H1 (cell line): ENCODE measurements at regions of chr16 and their contacts with region 1.

Region 1: GRCh38 chr16:87447323-87447722 is 45.5 kb downstream of the ZCCHC14 start:
- DNase-seq: no peak
- H3K4me3 ChIP-seq: no peak overlapping the region
- H3K27ac ChIP-seq: no peak overlapping the region
- H3K4me1 ChIP-seq: no peaks in the 10 kb centered on the region
- H3K27me3 ChIP-seq: no peaks in the 10 kb centered on the region
- CTCF ChIP-seq: no peak
- EP300 ChIP-seq: no peak
- POLR2A ChIP-seq: no peak
- RAD21 ChIP-seq: no peak

Region 2: DNA sequence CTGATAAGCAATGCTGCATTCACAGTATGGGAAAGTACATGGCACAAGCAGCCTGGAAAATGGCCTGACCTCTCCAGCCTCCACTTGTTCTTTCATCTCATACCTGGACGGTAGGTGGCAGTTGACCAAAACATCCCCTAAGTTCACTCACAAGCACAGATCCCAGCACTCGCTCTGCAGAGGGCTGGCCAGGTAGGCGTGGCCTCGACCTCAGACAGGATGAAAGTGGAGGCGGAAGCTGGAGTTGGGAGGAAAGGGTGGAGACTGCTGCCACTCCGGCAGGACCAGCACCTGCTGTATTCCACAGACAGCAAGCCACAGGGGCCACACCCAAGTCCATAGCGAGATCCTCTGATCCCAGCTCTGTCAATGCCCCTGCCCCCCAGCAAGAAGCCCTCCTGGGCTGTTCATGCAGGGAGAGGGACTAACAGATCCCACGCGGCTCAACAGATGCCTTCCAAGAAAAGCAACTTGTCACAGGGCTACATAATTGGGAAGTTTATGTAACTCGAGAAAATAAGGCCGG is 14.2 kb after region 1 on chr16:
- CTCF ChIA-PET with region 1: interaction called, 20 read pairs
- POLR2A ChIA-PET with region 1: no interaction called
- DNase-seq: peak; percentile 87
- H3K4me3 ChIP-seq: peak overlapping the region in 2 of 4 experiments; percentile 24 to 26; a peak in 4 of 8 replicates
- H3K27ac ChIP-seq: no peak overlapping the region
- H3K4me1 ChIP-seq: peaks cover 2 to 4% (median 3%) of the 10 kb centered on the region in 4 experiments; a peak in 6 of 7 replicates
- H3K27me3 ChIP-seq: no peaks in the 10 kb centered on the region
- CTCF ChIP-seq: peak; percentile 62 to 92 (median 65)
- EP300 ChIP-seq: no peak
- POLR2A ChIP-seq: no peak
- RAD21 ChIP-seq: peak; percentile 58 to 69

Region 3: DNA sequence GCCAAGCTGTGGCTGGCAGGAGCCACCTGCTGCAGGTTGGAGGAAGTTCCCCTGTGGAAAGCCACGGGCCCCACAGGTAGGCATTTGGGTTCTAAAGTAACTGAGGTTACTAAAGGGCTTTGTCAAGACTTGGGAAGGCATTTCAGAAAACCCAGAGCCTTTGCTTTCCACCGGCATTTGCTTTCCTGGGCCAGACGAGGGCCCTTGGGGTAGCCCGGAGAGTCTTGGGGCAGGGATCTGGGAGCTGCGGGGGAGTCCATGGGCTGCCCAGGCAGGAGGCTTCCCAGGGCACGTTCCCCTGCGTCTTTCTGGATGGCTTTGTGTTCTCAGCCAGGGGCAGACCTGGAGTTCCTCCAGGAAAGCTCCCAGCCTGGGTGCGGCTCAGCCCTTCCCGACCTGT is 198.5 kb after region 1 on chr16:
- CTCF ChIA-PET with region 1: no interaction called
- POLR2A ChIA-PET with region 1: no interaction called
- DNase-seq: no peak
- H3K4me3 ChIP-seq: no peak overlapping the region
- H3K27ac ChIP-seq: no peak overlapping the region
- H3K4me1 ChIP-seq: 0 out of 7 replicates have a peak, but pooled peaks cover 0 to 2% (median 0%) of the 10 kb centered on the region in 4 experiments
- H3K27me3 ChIP-seq: no peaks in the 10 kb centered on the region
- CTCF ChIP-seq: no peak
- EP300 ChIP-seq: no peak
- POLR2A ChIP-seq: no peak
- RAD21 ChIP-seq: no peak